BJ (cell line): ENCODE measurements at regions of chr10 and their contacts with region 1.

Region 1: DNA sequence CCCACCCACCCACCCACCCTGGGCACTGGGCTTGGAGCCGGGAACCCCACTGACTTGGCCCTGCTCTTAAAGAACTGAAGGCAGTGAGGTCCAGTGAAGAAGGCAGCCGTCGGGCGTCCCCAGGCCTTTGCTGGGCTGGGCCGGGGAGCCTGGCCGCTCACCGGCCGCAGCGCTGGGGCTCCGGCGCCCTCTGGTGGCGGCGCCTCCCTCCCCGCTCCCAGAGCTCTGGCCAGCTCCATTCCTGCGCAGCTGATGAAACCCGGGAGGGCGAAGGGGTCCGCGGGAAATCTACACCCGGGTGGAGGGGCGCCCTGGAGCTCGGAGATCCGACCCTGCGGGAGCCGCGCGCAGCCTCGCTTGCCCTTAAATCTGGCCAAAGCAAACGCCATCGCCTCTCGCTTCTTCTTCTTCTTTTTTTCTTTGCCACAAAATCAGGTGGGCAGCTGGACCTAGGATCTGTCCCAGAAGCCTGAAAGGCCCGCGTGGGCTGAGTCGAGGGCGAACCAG is 1.7 kb upstream of the CXCL12 start:
- DNase-seq: no peak
- H3K4me3 ChIP-seq: no peak overlapping the region
- H3K27me3 ChIP-seq: no peaks in the 10 kb centered on the region
- CTCF ChIP-seq: peak; percentile 77

Region 2: DNA sequence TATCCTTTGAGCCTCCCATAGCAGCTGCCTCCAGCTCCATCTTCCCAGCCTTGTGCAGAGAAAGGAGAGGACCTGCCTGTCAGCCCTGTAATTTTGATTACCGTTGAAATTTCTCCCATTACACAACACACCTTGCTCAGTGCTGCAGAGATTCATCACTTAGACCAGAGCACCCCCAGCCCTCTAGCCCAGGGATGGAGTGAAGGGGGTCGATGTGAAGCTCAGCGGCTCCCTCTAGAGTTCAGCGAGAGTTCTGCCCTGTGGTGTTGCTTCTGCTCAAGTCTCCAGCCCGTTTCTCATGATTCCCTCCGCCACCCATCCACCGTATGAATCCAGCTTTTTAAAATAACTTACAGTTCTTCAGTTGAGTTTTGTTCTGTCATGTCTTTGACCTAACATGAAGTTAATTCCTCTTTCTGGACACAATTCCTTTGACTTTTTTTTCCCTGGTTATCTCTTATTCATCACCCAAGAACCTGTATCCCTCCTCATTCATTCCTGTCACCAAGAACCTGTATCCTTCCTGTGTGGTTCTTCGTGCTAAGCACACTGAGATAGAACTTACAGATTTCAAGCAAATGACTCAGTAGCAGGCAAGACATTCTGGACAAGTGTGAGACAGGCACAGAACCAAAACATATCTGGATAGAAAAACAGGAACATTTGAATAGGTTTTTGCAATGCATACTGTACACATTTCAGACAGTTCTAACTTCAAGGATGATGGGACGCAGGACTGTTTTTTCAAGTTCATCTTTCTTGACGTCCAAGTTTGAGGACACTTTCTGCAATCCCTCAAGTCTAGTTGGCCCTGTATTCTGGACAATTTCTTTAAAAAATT is 702.9 kb before region 1 on chr10:
- CTCF ChIA-PET with region 1: interaction called, 30 read pairs
- POLR2A ChIA-PET with region 1: no interaction called
- DNase-seq: no peak
- H3K4me3 ChIP-seq: no peak overlapping the region
- H3K27me3 ChIP-seq: no peaks in the 10 kb centered on the region
- CTCF ChIP-seq: peak; percentile 57

Region 3: GRCh38 chr10:44864637-44865288 is 478.2 kb after region 1 on chr10:
- CTCF ChIA-PET with region 1: interaction called, 20 read pairs
- POLR2A ChIA-PET with region 1: no interaction called
- DNase-seq: no peak
- H3K4me3 ChIP-seq: peak overlapping the region; percentile 57
- H3K27me3 ChIP-seq: no peaks in the 10 kb centered on the region
- CTCF ChIP-seq: peak; percentile 94